Cardiac septum (tissue), 1 donor: ENCODE measurements at regions of chr10 and their contacts with region 1.

Region 1: GRCh38 chr10:92880233-92880861 is 32.0 kb downstream of the EXOC6 start:
- DNase-seq: no peak

Region 2: GRCh38 chr10:92848441-92849233 is 31.7 kb before region 1 on chr10 and contains the start of gene EXOC6:
- intact Hi-C with region 1: loop called (anchors 2 kb)
- DNase-seq: peak; percentile 92
- total RNA-seq, gene EXOC6: 9.9 TPM